Sciatic nerve (tissue), 2 donors: ENCODE measurements at regions of chr6 and their contacts with region 1.

Region 1: GRCh38 chr6:140480852-140481251 is 1106.4 kb upstream of the CITED2 start:
- DNase-seq: no peak
- ATAC-seq: peak; percentile 97

Region 2: GRCh38 chr6:138773177-138774091 is 1707.4 kb before region 1 on chr6 and contains the start of gene CCDC28A:
- intact Hi-C with region 1: no loop called
- DNase-seq: peak; percentile 95
- ATAC-seq: peak; percentile 98
- total RNA-seq, gene CCDC28A: 16.8 TPM

Region 3: GRCh38 chr6:141598487-141598886 is 1117.6 kb after region 1 on chr6:
- intact Hi-C with region 1: loop called (anchors 5 kb)
- DNase-seq: no peak
- ATAC-seq: no peak